Panc1 (cell line): ENCODE measurements at regions of chr10 and their contacts with region 1.

Region 1: DNA sequence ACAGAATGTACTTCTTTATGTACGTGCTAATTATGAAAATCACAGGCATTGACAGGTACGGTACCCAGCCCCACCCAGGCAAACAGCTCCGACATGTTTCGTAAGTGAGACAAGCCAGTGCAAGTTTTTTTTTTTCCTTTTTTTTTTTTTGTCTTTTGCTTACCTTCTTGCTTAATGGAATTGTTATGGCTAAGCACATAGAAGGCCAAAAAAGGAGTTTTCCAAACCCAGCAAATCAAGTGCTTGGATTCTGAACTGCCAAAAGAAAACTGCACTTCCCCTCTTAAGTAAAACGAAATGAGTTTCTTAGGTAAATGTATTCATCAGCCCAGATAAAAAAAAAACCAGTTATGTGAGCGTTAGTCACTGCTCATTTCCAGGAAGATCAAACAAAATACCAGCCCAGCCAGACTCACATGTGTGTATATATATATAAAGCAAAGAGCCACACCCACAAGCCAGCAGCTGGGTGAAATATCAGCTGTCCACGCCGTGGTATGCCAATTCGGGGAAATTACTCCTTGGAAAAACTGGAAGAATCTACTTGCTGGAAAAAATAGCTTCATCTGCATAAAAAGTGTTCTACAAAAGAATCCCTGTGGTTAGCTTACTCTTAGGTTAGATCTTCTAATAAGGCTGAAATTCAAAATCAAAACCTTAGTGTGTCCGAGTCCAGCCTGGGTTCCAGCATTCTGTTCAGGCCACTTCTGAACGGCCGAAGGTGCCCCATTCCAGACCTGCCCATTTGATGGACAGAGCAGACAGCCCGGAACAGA is 8.0 kb downstream of the KLF6 start:
- DNase-seq: peak; percentile 76
- ATAC-seq: no peak
- H3K4me3 ChIP-seq: peak overlapping the region; percentile 27 to 96
- H3K27ac ChIP-seq: peak overlapping the region; percentile 100
- H3K4me1 ChIP-seq: peaks cover 56% of the 10 kb centered on the region
- H3K27me3 ChIP-seq: no peaks in the 10 kb centered on the region
- CTCF ChIP-seq: no peak

Region 2: DNA sequence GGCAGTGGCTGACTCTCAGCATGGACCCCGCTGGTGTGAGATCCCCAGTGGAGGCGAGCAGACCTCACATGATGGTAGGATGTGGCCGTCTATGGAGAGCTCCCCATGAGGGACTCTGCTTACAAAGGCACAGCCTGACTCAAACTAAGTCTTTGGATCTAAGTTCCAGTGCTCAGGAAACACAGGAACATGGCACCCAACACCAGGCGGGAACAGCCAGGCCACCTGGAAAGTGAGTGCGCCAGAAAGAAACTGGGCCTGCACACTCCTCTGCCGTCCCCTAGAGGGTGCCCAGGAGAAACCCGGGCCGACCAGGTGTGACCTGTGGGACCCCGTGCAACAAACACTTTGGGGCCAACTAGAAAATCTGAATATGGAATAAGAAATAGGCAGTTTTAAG is 614.5 kb before region 1 on chr10:
- CTCF ChIA-PET with region 1: no interaction called
- POLR2A ChIA-PET with region 1: interaction called, 11 read pairs
- in situ Hi-C with region 1: no loop called
- intact Hi-C with region 1: no loop called
- DNase-seq: no peak
- ATAC-seq: no peak
- H3K4me3 ChIP-seq: no peak overlapping the region
- H3K27ac ChIP-seq: no peak overlapping the region
- H3K4me1 ChIP-seq: no peaks in the 10 kb centered on the region
- H3K27me3 ChIP-seq: no peaks in the 10 kb centered on the region
- CTCF ChIP-seq: peak; percentile 39; the same call in 1 of the 2 replicates

Region 3: DNA sequence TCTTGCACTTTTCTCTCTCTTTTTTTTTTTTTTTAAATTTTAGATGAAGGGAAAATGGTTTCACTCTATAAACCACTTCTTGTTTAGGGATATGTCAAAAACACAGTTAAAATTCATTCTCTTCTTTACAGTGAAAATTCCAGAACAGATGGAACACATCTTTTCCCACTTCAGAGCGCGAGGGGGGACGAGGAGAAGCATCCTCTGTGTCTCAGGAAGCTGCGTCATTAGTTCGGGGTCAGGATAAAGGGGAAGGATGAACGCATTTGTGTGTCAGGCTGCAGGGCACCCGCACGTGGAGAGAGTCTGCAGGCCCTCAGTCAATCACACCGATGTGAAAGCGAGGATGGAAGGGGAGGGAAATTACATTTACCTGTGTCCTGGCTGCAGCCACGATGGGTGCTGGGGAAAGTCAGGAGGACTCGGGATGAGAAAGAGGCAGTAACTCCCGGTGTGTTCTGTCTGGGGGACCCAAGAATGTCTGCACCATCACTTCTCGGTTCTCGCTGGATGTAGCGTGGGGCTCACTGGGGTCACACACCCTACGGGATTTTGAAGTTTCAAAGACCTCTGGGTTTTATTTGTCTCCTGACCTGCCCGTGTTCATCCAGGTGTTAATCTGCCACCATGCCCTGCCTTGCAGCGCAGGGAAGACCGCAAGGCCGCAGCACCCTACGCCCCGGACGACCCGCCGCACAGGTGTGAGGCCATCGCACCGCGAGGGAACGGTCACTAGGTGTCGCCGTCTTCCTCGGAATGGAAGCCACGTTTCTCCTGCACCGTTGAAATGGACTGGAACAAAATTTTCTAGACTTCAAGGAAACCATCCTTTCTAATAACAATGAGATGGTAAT is 537.7 kb before region 1 on chr10:
- CTCF ChIA-PET with region 1: no interaction called
- POLR2A ChIA-PET with region 1: no interaction called
- in situ Hi-C with region 1: no loop called
- intact Hi-C with region 1: loop called (anchors 5 kb)
- DNase-seq: peak; percentile 39
- ATAC-seq: peak; percentile 94
- H3K4me3 ChIP-seq: no peak overlapping the region
- H3K27ac ChIP-seq: peak overlapping the region; percentile 80; the same call in 1 of the 2 replicates
- H3K4me1 ChIP-seq: peaks cover 8% of the 10 kb centered on the region
- H3K27me3 ChIP-seq: no peaks in the 10 kb centered on the region
- CTCF ChIP-seq: peak; percentile 84

Region 4: GRCh38 chr10:3408603-3409365 is 368.2 kb before region 1 on chr10:
- CTCF ChIA-PET with region 1: no interaction called
- POLR2A ChIA-PET with region 1: no interaction called
- in situ Hi-C with region 1: no loop called
- intact Hi-C with region 1: no loop called
- DNase-seq: no peak
- ATAC-seq: no peak
- H3K4me3 ChIP-seq: no peak overlapping the region
- H3K27ac ChIP-seq: no peak overlapping the region
- H3K4me1 ChIP-seq: no peaks in the 10 kb centered on the region
- H3K27me3 ChIP-seq: no peaks in the 10 kb centered on the region
- CTCF ChIP-seq: no peak

Region 5: GRCh38 chr10:3623746-3624145 is 153.2 kb before region 1 on chr10:
- CTCF ChIA-PET with region 1: no interaction called
- POLR2A ChIA-PET with region 1: no interaction called
- in situ Hi-C with region 1: no loop called
- intact Hi-C with region 1: loop called (anchors 10 kb)
- DNase-seq: no peak
- ATAC-seq: peak; percentile 82
- H3K4me3 ChIP-seq: peak overlapping the region in 1 of 2 experiments; percentile 25; a peak in 2 of 4 replicates
- H3K27ac ChIP-seq: peak overlapping the region; percentile 93
- H3K4me1 ChIP-seq: peaks cover 7% of the 10 kb centered on the region; the same call in 1 of the 2 replicates
- H3K27me3 ChIP-seq: no peaks in the 10 kb centered on the region
- CTCF ChIP-seq: no peak

Region 6: GRCh38 chr10:3757638-3758490 is 19.1 kb before region 1 on chr10:
- CTCF ChIA-PET with region 1: no interaction called
- POLR2A ChIA-PET with region 1: interaction called, 12 read pairs
- in situ Hi-C with region 1: no loop called
- intact Hi-C with region 1: no loop called
- DNase-seq: peak; percentile 53
- ATAC-seq: peak; percentile 54
- H3K4me3 ChIP-seq: no peak overlapping the region
- H3K27ac ChIP-seq: peak overlapping the region; percentile 88
- H3K4me1 ChIP-seq: peaks cover 54% of the 10 kb centered on the region
- H3K27me3 ChIP-seq: no peaks in the 10 kb centered on the region
- CTCF ChIP-seq: no peak

Region 7: DNA sequence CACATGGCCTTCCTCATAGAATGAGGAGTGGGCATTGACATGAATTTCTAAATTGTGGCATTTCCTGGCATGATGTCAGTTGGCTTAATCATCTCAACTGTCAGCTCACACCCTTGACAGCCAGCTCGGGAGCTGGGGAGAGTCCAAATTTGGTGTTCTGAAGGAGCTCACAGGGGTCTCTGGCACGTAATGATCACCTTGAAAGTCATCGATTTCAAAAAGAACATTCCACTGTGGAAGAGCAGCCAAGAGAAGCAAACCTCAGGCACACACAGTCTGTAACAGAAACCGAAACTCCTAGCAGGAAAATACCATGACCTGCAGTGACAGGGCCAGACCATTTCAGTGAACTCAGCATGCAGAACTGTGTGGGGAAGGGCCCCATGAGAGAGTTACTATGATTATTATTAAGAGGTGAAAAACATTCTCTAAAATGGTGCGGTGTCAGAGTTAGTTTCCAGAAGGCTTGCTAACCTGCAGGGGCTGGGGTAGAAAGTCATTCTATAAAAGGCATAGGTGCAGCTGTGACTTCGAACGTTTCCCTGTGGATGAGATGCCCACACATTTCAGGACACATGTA is 34.4 kb after region 1 on chr10:
- CTCF ChIA-PET with region 1: no interaction called
- POLR2A ChIA-PET with region 1: interaction called, 11 read pairs
- in situ Hi-C with region 1: no loop called
- intact Hi-C with region 1: no loop called
- DNase-seq: no peak
- ATAC-seq: 0 out of 2 replicates have a peak, but pooled peaks have one; percentile 33
- H3K4me3 ChIP-seq: peak overlapping the region; percentile 5 to 7; a peak in 2 of 4 replicates
- H3K27ac ChIP-seq: peak overlapping the region; percentile 87
- H3K4me1 ChIP-seq: peaks cover 52% of the 10 kb centered on the region
- H3K27me3 ChIP-seq: no peaks in the 10 kb centered on the region
- CTCF ChIP-seq: no peak